ENCODE measurements at regions of chr20 and their contacts with region 1.

Region 1: DNA sequence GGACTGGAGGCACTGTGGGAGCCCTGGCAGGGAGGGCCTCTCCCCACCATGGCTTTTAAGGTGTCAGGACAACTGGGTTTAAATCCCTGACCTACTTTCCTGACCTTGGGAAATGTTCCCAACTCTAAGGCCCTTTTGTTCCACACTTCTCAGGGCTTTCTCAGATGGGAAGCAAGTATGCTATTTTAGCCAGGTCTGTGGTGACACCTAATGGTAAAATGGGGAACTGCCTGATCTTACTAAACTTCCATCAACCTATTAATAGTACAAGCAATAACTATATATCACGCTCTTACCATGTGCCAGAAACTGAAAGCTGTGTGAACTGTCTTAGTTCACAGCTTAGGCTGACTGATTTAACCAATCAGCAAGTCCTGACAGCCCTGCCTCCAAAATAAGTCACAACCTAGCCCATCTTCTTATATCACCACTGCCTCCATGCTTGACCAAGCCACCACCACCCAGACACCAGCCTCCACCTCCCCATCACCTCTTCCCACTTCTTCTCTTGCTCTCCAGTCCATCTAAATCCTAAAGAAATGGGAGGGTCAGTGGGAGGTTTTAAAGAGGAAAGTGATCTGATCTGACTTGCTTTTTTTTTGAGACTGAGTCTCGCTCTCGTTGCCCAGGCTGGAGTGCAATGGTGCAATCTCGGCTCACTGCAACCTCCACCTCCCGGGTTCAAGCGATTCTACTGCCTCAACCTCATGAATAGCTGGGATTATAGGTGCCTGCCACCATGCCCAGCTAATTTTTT is 6.9 kb upstream of the BLCAP start:
- DNase-seq: peak; percentile 54 to 78 (median 62)
- ATAC-seq: peak; percentile 96
- H3K4me3 ChIP-seq: no peak overlapping the region
- H3K27ac ChIP-seq: peak overlapping the region in 1 of 4 donors; percentile 11
- H3K4me1 ChIP-seq: no peaks in the 10 kb centered on the region
- H3K27me3 ChIP-seq: no peaks in the 10 kb centered on the region
- CTCF ChIP-seq: peak; percentile 55 to 95 (median 92)
- POLR2A ChIP-seq: no peak

Region 2: GRCh38 chr20:37194621-37195417 is 339.8 kb before region 1 on chr20:
- intact Hi-C with region 1: loop called (anchors 5 kb)
- DNase-seq: peak in 1 of 4 donors; percentile 10
- ATAC-seq: no peak
- H3K4me3 ChIP-seq: no peak overlapping the region
- H3K27ac ChIP-seq: no peak overlapping the region
- H3K4me1 ChIP-seq: peaks cover 53% of the 10 kb centered on the region
- H3K27me3 ChIP-seq: no peaks in the 10 kb centered on the region
- CTCF ChIP-seq: no peak
- POLR2A ChIP-seq: no peak

Region 3: GRCh38 chr20:37265152-37265551 is 269.4 kb before region 1 on chr20:
- intact Hi-C with region 1: loop called (anchors 5 kb)
- DNase-seq: peak in 1 of 4 donors; percentile 17
- ATAC-seq: no peak
- H3K4me3 ChIP-seq: no peak overlapping the region
- H3K27ac ChIP-seq: no peak overlapping the region
- H3K4me1 ChIP-seq: peaks cover 7% of the 10 kb centered on the region
- H3K27me3 ChIP-seq: no peaks in the 10 kb centered on the region
- CTCF ChIP-seq: no peak
- POLR2A ChIP-seq: no peak

Region 4: DNA sequence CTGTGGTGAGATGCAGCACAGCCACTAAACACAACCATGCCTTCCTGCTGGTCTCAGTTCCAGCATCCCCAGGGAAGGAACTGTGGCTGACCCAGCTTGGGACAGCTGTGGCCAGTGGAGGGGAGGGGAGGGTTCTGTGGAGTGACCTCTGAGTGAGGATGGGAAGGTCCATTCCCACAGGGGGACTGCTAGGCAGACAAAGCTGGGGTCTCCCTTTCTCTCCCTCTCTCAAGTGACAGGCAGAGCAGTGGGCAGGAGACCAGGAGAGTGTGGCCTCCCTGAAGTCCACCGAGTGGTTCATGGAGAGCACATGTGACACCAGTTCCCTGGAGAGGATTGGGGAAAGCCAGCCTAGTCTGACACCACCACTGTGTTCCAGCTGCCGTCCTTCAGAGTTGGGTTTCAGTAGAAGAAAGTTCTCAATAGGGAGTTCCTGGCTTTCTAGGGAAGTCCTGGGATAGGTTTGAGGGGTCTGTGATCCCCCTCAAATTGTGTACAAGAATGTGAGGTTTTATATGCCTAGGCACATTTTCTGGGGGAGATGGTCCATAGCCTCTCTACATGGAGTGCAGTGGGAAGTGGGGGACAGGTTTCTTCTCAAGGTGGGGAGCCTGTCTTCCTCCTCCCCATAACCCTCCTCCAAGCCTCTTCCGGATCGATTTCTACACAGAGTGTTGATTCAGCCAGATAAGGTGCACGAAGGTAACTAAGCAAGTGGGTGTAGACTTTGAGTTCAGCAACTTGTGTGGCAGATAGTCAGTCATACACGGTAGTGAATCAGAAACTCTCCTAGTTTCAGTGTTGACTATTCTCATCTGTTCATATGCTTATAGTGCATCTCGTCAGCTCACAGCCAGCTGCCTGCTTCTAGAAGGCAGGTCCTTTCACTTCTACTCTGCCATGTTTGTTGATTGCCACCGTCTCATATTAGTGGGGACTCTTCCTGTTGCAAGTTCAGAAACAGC is 226.2 kb before region 1 on chr20:
- intact Hi-C with region 1: no loop called
- DNase-seq: no peak
- ATAC-seq: peak; percentile 54
- H3K4me3 ChIP-seq: no peak overlapping the region
- H3K27ac ChIP-seq: peak overlapping the region in 3 of 4 donors; percentile 27 to 40 (median 36)
- H3K4me1 ChIP-seq: peaks cover 35% of the 10 kb centered on the region
- H3K27me3 ChIP-seq: no peaks in the 10 kb centered on the region
- CTCF ChIP-seq: no peak
- POLR2A ChIP-seq: no peak

Region 5: DNA sequence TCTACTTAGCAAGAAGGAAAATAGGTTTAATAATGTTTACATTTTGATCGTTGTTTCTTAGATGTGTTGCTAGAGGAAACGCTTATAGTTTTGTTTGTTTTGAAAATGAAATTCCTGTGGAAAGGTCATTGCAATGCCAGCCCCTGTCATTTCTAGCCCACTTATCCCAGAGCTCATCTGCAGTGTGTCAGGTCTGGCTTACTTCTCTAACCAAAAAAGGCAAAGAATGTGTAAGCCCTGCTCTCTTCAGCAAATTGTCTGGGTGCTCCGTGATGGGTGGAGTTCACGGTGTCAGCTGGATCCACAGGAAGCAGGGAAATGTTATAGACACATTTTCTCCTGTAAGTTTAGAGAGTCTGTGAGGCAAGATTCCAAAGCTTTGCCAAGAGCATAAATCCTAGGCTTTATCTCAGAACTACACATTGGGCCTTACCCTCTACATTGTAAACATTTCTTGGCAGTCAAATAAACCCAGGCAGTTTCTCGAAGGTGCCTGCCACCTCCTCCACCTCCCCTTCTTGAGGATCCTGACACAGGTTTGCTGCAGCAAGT is 549.9 kb after region 1 on chr20:
- intact Hi-C with region 1: no loop called
- DNase-seq: no peak
- ATAC-seq: no peak
- H3K4me3 ChIP-seq: no peak overlapping the region
- H3K27ac ChIP-seq: no peak overlapping the region
- H3K4me1 ChIP-seq: peaks cover 4% of the 10 kb centered on the region
- H3K27me3 ChIP-seq: no peaks in the 10 kb centered on the region
- CTCF ChIP-seq: no peak
- POLR2A ChIP-seq: no peak

Measured in body of pancreas (tissue), 4 donors.